Activated T-helper 1 cell treated with anti-CD3 and anti-CD28 coated beads, Interleukin-12 subunit alpha, Interleukin-12 subunit beta, Interleukin-2, Interleukin-4 antibody, amounts not matched to agents 30 ng/mL and 10 ng/mL and 1 ng/mL, durations not matched to agents 14 hours and 24 hours and 36 hours (primary cell): ENCODE measurements at regions of chr18 and their contacts with region 1.

Region 1: GRCh38 chr18:13611601-13612195 is 114.7 kb downstream of the FAM210A start:
- DNase-seq: no peak
- H3K4me3 Mint-ChIP-seq: peak overlapping the region; percentile 80
- H3K27ac Mint-ChIP-seq: peak overlapping the region; percentile 83
- H3K4me1 Mint-ChIP-seq: peaks cover 73% of the 10 kb centered on the region
- H3K27me3 Mint-ChIP-seq: peaks cover 1% of the 10 kb centered on the region

Region 2: GRCh38 chr18:13137670-13138419 is 473.9 kb before region 1 on chr18:
- intact Hi-C with region 1: loop called (anchors 5 kb)
- DNase-seq: peak; percentile 76
- H3K4me3 Mint-ChIP-seq: peak overlapping the region; percentile 91
- H3K27ac Mint-ChIP-seq: peak overlapping the region; percentile 79
- H3K4me1 Mint-ChIP-seq: peaks cover 21% of the 10 kb centered on the region
- H3K27me3 Mint-ChIP-seq: peaks cover 11% of the 10 kb centered on the region

Region 3: DNA sequence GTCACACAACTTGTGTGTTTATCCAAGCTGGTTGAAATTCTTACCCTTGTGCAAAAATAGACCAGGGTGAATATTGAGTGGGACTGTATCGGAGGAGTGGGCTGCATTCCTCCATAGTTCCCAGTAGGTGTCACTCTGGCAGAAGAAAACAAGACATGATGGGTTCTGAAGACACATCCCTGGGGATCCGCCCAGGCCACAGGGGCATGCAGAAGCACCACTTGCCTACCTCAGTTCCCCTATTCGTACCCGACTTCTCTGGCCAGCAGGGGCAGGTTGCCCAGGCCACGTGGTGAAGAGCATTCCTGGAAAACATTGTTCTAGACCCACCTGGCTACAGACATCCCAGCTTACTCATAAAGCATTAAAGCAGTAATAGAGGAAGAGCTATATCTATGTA is 53.6 kb before region 1 on chr18:
- intact Hi-C with region 1: loop called (anchors 1 kb)
- DNase-seq: no peak
- H3K4me3 Mint-ChIP-seq: no peak overlapping the region
- H3K27ac Mint-ChIP-seq: peak overlapping the region; percentile 27
- H3K4me1 Mint-ChIP-seq: peaks cover 34% of the 10 kb centered on the region
- H3K27me3 Mint-ChIP-seq: no peaks in the 10 kb centered on the region

Region 4: DNA sequence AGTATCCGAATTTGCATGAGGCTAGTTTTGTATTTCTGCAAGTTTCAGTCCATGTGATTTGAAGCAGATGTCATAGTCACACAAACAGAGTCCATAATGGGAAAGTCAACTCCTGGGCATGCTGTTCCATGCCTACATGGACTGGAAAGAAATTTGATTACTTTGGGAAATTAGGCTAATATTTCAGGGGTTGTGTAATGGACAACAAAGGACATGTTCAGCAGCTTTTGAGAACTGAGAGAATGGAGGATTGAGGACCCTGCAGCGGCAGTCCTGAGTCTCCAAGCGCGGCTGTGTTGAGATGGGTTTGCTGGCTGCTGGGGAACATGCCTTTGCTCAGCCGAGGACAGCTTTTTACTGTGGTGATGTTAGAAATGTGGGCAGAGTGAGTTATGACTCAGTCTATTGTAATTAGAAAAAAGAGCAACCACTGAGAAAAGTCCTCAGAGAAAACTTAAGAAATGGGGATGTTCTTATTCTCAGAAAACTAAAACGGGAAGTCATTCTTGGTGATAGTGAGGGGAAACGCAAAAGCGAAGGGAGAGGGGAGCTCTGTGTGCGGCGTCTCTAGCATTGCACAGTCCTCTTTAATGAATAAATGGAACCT is 34.5 kb before region 1 on chr18:
- intact Hi-C with region 1: loop called (anchors 1 kb)
- DNase-seq: peak; percentile 41
- H3K4me3 Mint-ChIP-seq: peak overlapping the region; percentile 67
- H3K27ac Mint-ChIP-seq: peak overlapping the region; percentile 87
- H3K4me1 Mint-ChIP-seq: peaks cover 56% of the 10 kb centered on the region
- H3K27me3 Mint-ChIP-seq: no peaks in the 10 kb centered on the region

Region 5: DNA sequence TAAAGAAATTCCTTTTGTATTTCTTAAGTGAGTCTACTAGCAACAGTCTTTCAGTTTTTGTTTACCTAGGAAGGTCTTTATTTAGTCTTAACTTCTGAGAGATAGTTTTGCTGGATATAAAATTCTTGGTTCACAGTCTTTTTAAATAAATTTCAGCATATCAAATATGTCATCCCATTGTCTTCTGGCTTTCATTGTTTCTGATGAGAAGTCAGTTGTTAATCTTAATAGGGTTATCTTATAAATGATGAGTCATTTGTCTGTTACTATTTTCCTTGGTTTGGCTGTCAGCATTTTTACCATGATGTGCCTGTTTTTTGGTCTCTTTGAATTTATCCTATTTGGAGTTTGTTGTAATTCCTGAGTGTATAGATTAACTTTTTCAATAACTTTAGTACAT is 14.6 kb before region 1 on chr18:
- intact Hi-C with region 1: loop called (anchors 1 kb)
- DNase-seq: no peak
- H3K4me3 Mint-ChIP-seq: no peak overlapping the region
- H3K27ac Mint-ChIP-seq: no peak overlapping the region
- H3K4me1 Mint-ChIP-seq: peaks cover 8% of the 10 kb centered on the region
- H3K27me3 Mint-ChIP-seq: no peaks in the 10 kb centered on the region

Region 6: GRCh38 chr18:13621886-13622619 is 10.4 kb after region 1 on chr18:
- intact Hi-C with region 1: no loop called
- DNase-seq: no peak
- H3K4me3 Mint-ChIP-seq: no peak overlapping the region
- H3K27ac Mint-ChIP-seq: no peak overlapping the region
- H3K4me1 Mint-ChIP-seq: peaks cover 20% of the 10 kb centered on the region
- H3K27me3 Mint-ChIP-seq: no peaks in the 10 kb centered on the region